OCI-LY7 (cell line): ENCODE measurements at regions of chr3 and their contacts with region 1.

Region 1: GRCh38 chr3:57692259-57693147 is at the start of gene DENND6A:
- DNase-seq: peak; percentile 97
- H3K4me3 ChIP-seq: peak within 1 kb of the TSS; percentile 91
- H3K27ac ChIP-seq: peak within 1 kb of the TSS; percentile 60
- H3K4me1 ChIP-seq: peaks cover 31% of the 10 kb centered on the region
- CTCF ChIP-seq: no peak
- total RNA-seq, gene DENND6A: 15.9 and 25.5 TPM in 2 replicates

Region 2: GRCh38 chr3:56682462-56683121 is 1009.9 kb before region 1 on chr3:
- CTCF ChIA-PET with region 1: no interaction called
- POLR2A ChIA-PET with region 1: no interaction called
- intact Hi-C with region 1: loop called (anchors 10 kb)
- DNase-seq: peak; percentile 86
- H3K4me3 ChIP-seq: peak overlapping the region; percentile 95
- H3K27ac ChIP-seq: peak overlapping the region; percentile 91
- H3K4me1 ChIP-seq: peaks cover 33% of the 10 kb centered on the region
- CTCF ChIP-seq: 0 out of 2 replicates have a peak, but pooled peaks have one; percentile 8

Region 3: GRCh38 chr3:57675530-57675929 is 17.0 kb before region 1 on chr3:
- CTCF ChIA-PET with region 1: interaction called, 3 read pairs
- POLR2A ChIA-PET with region 1: interaction called, 10 read pairs
- intact Hi-C with region 1: loop called (anchors 2 kb)
- DNase-seq: no peak
- H3K4me3 ChIP-seq: no peak overlapping the region
- H3K27ac ChIP-seq: no peak overlapping the region
- H3K4me1 ChIP-seq: peaks cover 46% of the 10 kb centered on the region
- CTCF ChIP-seq: no peak

Region 4: DNA sequence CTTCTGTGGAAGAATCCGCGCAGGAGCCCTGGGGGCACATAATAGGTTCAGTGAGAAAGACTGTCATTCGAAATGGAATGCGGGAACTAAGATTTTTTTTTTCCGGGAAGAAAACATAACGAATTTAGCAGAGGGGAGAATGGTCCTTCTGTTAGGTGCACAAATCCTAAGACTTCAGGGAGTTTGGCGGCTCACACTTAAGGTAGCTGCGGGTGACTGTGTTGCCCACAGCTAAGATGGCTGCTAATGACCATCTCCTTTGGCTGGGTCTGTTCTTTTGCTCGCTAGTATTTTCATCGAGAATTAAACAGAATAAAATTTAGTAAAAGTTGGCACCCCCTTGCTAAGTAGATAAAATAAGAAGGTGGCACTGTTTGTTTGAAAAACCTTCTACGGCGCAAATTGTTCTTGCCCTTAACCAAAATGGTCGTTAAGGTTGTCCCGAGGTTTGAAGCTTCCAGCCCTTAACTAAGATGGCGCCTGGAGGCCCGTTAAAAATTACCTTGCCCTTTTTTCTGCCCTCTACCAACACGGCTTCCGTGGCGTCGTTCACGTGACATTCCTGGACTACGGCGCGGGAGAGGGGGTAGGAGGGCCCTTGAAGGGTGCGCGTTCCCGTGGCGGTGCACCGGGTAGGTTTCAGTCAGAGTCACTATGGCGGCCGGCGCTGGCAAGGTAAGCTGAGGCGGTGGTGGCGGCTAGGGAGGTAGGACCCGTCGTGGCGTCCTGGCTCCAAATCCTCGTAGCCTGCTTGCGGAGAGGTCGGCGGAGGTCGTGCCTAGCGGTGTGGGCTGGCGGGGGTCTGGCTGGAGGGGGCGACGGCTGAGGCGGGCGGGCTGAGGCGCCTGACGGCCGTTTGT is 63.4 kb after region 1 on chr3 and contains the start of gene SLMAP:
- CTCF ChIA-PET with region 1: no interaction called
- POLR2A ChIA-PET with region 1: interaction called, 4 read pairs
- intact Hi-C with region 1: loop called (anchors 1 kb)
- DNase-seq: peak; percentile 97
- H3K4me3 ChIP-seq: peak within 1 kb of the TSS; percentile 80
- H3K27ac ChIP-seq: peak within 1 kb of the TSS; percentile 64
- H3K4me1 ChIP-seq: peaks cover 35% of the 10 kb centered on the region
- CTCF ChIP-seq: 0 out of 2 replicates have a peak, but pooled peaks have one; percentile 2
- total RNA-seq, gene SLMAP: 39.1 and 41.6 TPM in 2 replicates